ENCODE measurements at regions of chr2 and their contacts with region 1.

Region 1: DNA sequence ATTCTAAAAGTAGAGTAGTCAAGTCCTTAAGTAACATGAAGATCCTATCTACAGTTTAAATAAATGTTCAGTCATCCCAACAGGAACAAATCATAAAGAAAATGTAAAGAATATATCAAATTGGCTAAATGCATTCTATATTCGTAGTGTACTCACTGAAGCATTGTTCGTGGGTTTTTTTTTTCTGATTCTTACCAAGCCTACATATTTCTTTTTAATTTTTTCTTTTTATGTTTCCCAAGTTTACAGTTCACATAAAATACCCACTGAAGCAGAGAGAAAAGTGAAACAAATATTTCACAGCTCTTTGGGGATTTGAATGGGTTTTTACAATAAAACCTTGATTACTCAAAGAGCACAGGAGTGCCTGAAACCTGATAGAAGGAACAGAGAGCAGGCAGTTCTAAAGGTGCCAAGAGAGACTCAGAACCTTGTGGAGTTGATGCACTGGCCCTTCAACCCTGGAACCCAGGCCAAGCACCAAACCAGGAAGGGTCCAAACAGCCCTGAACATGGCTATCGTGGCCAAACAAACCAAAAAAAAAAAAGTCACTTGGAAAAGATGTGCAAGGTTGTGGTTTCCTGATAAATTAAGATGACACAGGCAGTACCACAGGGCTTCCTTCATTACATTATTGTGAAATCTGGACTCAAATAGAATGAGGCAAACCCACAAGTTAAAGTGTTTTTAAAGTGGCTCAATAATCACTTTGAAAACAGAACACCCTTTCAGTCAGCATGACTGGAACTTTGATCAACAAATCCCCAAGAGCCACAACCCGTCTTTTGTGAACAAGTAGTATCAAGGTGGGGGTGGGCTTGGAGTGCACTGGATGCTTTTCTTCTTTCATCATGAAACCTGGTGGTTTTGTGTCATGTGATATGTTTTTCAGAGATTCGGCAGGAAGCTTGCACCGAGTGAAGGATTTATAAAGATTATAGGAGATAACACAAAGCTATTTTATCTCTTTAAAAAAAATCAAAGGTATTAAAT is 245.0 kb upstream of the FN1 start:
- DNase-seq: peak; percentile 50
- ATAC-seq: peak; percentile 94
- H3K4me3 ChIP-seq: 0 out of 2 replicates have a peak overlapping the region, but pooled peaks have one; percentile 5
- H3K27ac ChIP-seq: no peak overlapping the region
- H3K4me1 ChIP-seq: no peaks in the 10 kb centered on the region
- H3K27me3 ChIP-seq: no peaks in the 10 kb centered on the region
- CTCF ChIP-seq: no peak
- EP300 ChIP-seq: peak; percentile 44 to 45; a peak in 2 of 4 replicates
- POLR2A ChIP-seq: no peak
- RAD21 ChIP-seq: no peak

Region 2: GRCh38 chr2:215619022-215619958 is 61.6 kb before region 1 on chr2:
- CTCF ChIA-PET with region 1: no interaction called
- POLR2A ChIA-PET with region 1: interaction called, 4 read pairs
- RAD21 ChIA-PET with region 1: no interaction called
- SMC1A ChIA-PET with region 1: no interaction called
- in situ Hi-C with region 1: no loop called
- intact Hi-C with region 1: loop called (anchors 5 kb)
- DNase-seq: no peak
- ATAC-seq: peak; percentile 88
- H3K4me3 ChIP-seq: no peak overlapping the region
- H3K27ac ChIP-seq: no peak overlapping the region
- H3K4me1 ChIP-seq: no peaks in the 10 kb centered on the region
- H3K27me3 ChIP-seq: no peaks in the 10 kb centered on the region
- CTCF ChIP-seq: no peak
- EP300 ChIP-seq: no peak
- POLR2A ChIP-seq: no peak
- RAD21 ChIP-seq: no peak

Region 3: GRCh38 chr2:215670396-215670795 is 10.5 kb before region 1 on chr2:
- CTCF ChIA-PET with region 1: interaction called, 5 read pairs
- POLR2A ChIA-PET with region 1: interaction called, 3 read pairs
- RAD21 ChIA-PET with region 1: interaction called, 17 read pairs
- SMC1A ChIA-PET with region 1: interaction called, 19 read pairs
- in situ Hi-C with region 1: no loop called
- intact Hi-C with region 1: loop called (anchors 1 kb)
- DNase-seq: no peak
- ATAC-seq: no peak
- H3K4me3 ChIP-seq: no peak overlapping the region
- H3K27ac ChIP-seq: no peak overlapping the region
- H3K4me1 ChIP-seq: no peaks in the 10 kb centered on the region
- H3K27me3 ChIP-seq: no peaks in the 10 kb centered on the region
- CTCF ChIP-seq: no peak
- EP300 ChIP-seq: no peak
- POLR2A ChIP-seq: no peak
- RAD21 ChIP-seq: no peak

Region 4: GRCh38 chr2:215828517-215829184 is 147.7 kb after region 1 on chr2:
- CTCF ChIA-PET with region 1: interaction called, 3 read pairs
- POLR2A ChIA-PET with region 1: interaction called, 6 read pairs
- RAD21 ChIA-PET with region 1: no interaction called
- SMC1A ChIA-PET with region 1: interaction called, 9 read pairs
- in situ Hi-C with region 1: no loop called
- intact Hi-C with region 1: loop called (anchors 5 kb)
- DNase-seq: no peak
- ATAC-seq: peak; percentile 80
- H3K4me3 ChIP-seq: no peak overlapping the region
- H3K27ac ChIP-seq: no peak overlapping the region
- H3K4me1 ChIP-seq: peaks cover 5% of the 10 kb centered on the region
- H3K27me3 ChIP-seq: no peaks in the 10 kb centered on the region
- CTCF ChIP-seq: peak; percentile 54 to 73 (median 68)
- EP300 ChIP-seq: no peak
- POLR2A ChIP-seq: no peak
- RAD21 ChIP-seq: peak; percentile 80

Region 5: DNA sequence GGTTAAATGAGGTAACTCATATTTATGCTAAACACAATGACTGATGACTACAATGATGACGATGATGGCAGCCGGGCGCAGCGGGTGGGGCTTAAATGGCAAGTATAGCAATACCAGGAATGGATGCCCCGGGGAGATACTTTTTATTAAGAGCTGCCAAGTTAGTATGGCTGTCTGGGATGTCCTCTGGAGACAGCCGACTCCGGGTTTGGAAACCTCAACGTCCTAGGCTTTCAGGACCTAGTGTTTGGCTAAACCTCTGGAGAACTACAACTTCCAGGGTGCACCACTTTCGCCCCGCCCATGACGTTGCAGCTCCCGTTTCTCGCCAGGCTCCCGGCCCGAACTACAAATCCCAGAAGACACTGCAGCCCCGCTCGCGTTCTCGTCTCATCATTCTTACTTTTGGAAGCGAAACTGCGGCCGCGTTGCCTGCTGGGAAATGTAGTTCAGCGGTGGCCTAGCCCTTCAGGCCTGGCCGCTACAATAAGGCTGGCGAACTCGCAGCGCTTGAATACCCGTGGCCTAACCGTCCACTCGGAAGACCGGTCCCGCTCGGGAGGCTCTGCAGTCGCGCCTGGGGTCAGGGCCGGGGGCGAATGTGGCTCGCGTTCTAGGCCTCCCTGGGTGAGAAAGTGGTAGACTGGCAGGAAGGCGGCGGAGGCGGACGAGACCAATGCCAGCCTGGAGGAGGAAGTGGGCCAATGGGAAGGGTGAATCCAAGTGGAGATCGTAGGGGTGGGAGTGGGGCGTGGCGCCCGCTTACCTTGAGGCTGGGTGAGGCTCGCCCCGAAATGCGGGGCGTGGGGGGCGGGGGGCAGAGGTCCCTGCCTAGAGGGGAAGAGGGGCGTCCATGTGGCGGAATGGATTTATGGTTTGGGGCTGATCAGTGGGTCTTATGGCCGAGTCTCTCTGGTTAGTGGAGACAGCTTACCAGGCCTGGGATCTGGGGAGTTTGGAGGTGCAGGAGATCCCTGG is 731.4 kb after region 1 on chr2 and contains the start of gene SMARCAL1:
- CTCF ChIA-PET with region 1: no interaction called
- POLR2A ChIA-PET with region 1: no interaction called
- RAD21 ChIA-PET with region 1: no interaction called
- SMC1A ChIA-PET with region 1: no interaction called
- in situ Hi-C with region 1: no loop called
- intact Hi-C with region 1: no loop called
- DNase-seq: peak; percentile 92
- ATAC-seq: peak; percentile 92
- H3K4me3 ChIP-seq: peak within 1 kb of the TSS; percentile 82
- H3K27ac ChIP-seq: peak within 1 kb of the TSS; percentile 97
- H3K4me1 ChIP-seq: peaks cover 10% of the 10 kb centered on the region
- H3K27me3 ChIP-seq: no peaks in the 10 kb centered on the region
- CTCF ChIP-seq: no peak
- EP300 ChIP-seq: no peak
- POLR2A ChIP-seq: peak; percentile 89
- RAD21 ChIP-seq: no peak
- polyA plus RNA-seq, gene SMARCAL1: 10.8 to 11.4 TPM